A549 (cell line): ENCODE measurements at regions of chr3 and their contacts with region 1.

Region 1: DNA sequence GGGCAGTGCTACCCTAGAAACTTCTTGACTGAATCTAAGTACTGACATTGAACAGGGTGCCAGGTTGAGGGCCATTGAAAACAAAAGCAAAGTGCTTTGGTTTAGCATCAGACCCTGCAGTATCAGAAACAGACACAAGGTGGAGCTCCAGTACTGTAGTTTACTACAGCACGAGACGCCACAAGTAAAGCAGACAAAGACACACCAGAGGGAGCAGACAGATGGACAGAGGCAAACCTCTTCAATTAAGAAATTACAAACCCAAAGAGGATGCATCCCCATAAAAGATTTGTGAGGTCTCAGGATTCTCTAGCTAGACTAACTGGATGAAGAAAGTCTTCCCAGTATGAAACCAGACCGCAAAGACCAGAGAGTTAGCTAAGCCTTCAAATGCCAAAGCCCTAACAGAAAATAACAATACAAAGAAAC is 16.6 kb downstream of the TOP2B start:
- DNase-seq: peak; percentile 48 to 83
- ATAC-seq: peak; percentile 99
- H3K4me3 ChIP-seq: no peak overlapping the region
- H3K27ac ChIP-seq: no peak overlapping the region
- H3K4me1 ChIP-seq: 0 out of 3 replicates have a peak, but pooled peaks cover 3% of the 10 kb centered on the region
- CTCF ChIP-seq: peak; percentile 85
- EP300 ChIP-seq: no peak
- POLR2A ChIP-seq: no peak
- RAD21 ChIP-seq: peak; percentile 87 to 92

Region 2: GRCh38 chr3:25433868-25434267 is 214.3 kb before region 1 on chr3:
- CTCF ChIA-PET with region 1: no interaction called
- POLR2A ChIA-PET with region 1: no interaction called
- DNase-seq: peak in 1 of 2 experiments; percentile 78
- ATAC-seq: peak; percentile 69 to 82
- H3K4me3 ChIP-seq: peak overlapping the region; percentile 68
- H3K27ac ChIP-seq: peak overlapping the region; percentile 85 to 92
- H3K4me1 ChIP-seq: peaks cover 53% of the 10 kb centered on the region
- CTCF ChIP-seq: no peak
- EP300 ChIP-seq: no peak
- POLR2A ChIP-seq: no peak
- RAD21 ChIP-seq: no peak

Region 3: DNA sequence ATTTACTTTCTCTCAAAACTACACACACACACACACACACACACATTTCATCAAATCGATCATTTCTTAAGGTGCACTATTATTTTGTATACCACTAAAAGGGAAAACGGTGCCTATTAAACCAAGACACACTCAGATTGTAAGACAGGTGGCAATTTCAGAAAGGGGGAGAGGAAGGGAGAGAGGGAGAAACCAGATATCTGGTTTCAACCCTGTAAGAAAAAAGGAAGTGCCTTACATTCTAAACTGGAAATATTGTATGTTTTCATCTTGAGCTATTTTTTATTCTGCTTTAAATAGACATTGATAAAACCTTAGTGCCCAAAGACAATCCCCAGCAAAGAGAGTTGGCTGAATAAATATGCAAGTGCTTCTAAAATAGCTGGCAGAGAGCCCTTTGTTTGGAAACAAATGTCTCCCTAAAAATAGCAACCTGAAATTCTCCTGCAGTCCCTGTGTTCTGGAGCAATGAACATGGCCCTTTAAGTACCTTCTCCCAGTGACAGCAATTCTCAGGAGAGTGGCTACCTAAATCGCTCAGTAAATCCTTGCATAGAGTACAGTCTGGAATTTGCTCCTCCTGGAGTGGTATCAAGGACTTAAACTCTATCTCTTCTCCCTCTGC is 134.4 kb before region 1 on chr3:
- CTCF ChIA-PET with region 1: no interaction called
- POLR2A ChIA-PET with region 1: no interaction called
- DNase-seq: no peak
- ATAC-seq: no peak
- H3K4me3 ChIP-seq: no peak overlapping the region
- H3K27ac ChIP-seq: no peak overlapping the region; a peak in 1 of 6 replicates
- H3K4me1 ChIP-seq: peaks cover 12% of the 10 kb centered on the region
- CTCF ChIP-seq: no peak
- EP300 ChIP-seq: no peak
- POLR2A ChIP-seq: no peak
- RAD21 ChIP-seq: no peak

Region 4: DNA sequence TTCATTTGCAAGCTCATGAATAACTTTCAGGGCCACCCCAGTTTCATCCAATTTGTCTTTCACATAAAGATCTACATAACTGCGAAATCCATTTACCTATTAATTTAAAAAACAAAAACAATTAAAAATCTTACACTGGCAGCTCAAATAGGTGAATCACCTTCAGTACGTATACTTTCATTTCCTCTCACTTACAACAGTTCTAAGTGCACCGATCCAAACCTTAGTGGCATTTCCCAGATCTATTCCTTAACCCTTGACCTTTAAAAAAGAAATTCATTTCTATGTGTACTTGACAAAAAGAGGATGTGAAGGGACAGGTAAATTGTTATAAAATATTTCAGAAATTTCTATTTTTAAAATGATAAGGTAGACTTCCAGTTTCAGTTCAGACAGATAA is 14.2 kb before region 1 on chr3:
- CTCF ChIA-PET with region 1: interaction called, 15 read pairs
- POLR2A ChIA-PET with region 1: no interaction called
- DNase-seq: no peak
- ATAC-seq: no peak
- H3K4me3 ChIP-seq: no peak overlapping the region
- H3K27ac ChIP-seq: no peak overlapping the region
- H3K4me1 ChIP-seq: peaks cover 38% of the 10 kb centered on the region
- CTCF ChIP-seq: no peak
- EP300 ChIP-seq: no peak
- POLR2A ChIP-seq: no peak
- RAD21 ChIP-seq: no peak

Region 5: DNA sequence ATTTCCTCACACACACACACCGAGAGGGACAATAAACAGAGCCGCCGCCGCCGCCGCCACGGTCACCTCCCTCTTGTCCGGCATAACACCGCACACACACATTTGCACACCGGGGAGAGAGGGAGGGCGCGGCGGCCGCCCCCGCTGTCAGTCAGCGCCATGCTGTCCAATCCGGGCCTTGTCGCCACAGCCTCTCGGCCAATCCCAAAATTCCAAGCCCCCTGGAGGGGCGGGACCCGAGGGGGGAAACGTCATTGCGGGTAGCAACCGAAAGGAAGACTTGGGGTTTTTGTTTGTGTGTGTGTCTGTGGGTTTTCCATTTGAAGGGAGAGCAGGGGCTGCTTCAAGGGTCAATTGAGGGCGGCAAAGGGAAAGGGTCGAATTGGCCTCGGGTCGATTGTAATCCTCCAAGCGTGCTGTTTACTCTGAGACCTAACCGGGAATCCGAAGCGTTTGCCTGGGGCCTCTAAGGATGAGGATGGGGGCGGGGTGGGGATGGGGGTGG is 16.7 kb after region 1 on chr3 and contains the start of gene TOP2B:
- CTCF ChIA-PET with region 1: interaction called, 18 read pairs
- POLR2A ChIA-PET with region 1: no interaction called
- DNase-seq: peak; percentile 95 to 98
- ATAC-seq: peak; percentile 96 to 99
- H3K4me3 ChIP-seq: peak within 1 kb of the TSS; percentile 73
- H3K27ac ChIP-seq: peak within 1 kb of the TSS; percentile 86 to 97
- H3K4me1 ChIP-seq: peaks cover 24% of the 10 kb centered on the region
- CTCF ChIP-seq: no peak
- EP300 ChIP-seq: no peak
- POLR2A ChIP-seq: peak; percentile 57
- RAD21 ChIP-seq: no peak
- polyA plus RNA-seq, gene TOP2B: 85.5 and 95.7 TPM in 2 replicates

Region 6: GRCh38 chr3:25707268-25707926 is 59.3 kb after region 1 on chr3:
- CTCF ChIA-PET with region 1: no interaction called
- POLR2A ChIA-PET with region 1: no interaction called
- DNase-seq: no peak
- ATAC-seq: no peak
- H3K4me3 ChIP-seq: no peak overlapping the region
- H3K27ac ChIP-seq: no peak overlapping the region
- H3K4me1 ChIP-seq: no peaks in the 10 kb centered on the region
- CTCF ChIP-seq: no peak
- EP300 ChIP-seq: no peak
- POLR2A ChIP-seq: no peak
- RAD21 ChIP-seq: no peak

Region 7: DNA sequence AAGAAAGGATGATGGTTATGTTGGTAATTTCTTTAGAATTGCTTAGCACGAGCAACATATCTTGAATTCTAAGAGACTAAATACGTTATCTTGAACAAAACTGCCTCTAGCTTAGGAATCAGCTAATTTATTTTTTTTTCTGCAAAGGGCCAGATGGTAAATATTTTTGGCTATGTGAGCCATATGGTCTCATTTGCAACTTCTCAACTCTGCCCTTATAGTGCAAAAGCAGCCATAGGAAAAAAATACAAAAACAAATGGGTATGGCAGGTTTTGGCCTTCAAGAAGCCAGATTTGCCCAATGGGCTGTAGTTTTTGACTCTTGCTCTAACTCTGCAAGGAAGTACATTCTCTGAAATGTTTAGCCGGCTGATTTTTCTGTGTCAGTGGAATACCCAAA is 153.7 kb after region 1 on chr3:
- CTCF ChIA-PET with region 1: no interaction called
- POLR2A ChIA-PET with region 1: no interaction called
- DNase-seq: no peak
- ATAC-seq: no peak
- H3K4me3 ChIP-seq: no peak overlapping the region
- H3K27ac ChIP-seq: no peak overlapping the region
- H3K4me1 ChIP-seq: no peaks in the 10 kb centered on the region
- CTCF ChIP-seq: no peak
- EP300 ChIP-seq: no peak
- POLR2A ChIP-seq: no peak
- RAD21 ChIP-seq: no peak

Region 8: DNA sequence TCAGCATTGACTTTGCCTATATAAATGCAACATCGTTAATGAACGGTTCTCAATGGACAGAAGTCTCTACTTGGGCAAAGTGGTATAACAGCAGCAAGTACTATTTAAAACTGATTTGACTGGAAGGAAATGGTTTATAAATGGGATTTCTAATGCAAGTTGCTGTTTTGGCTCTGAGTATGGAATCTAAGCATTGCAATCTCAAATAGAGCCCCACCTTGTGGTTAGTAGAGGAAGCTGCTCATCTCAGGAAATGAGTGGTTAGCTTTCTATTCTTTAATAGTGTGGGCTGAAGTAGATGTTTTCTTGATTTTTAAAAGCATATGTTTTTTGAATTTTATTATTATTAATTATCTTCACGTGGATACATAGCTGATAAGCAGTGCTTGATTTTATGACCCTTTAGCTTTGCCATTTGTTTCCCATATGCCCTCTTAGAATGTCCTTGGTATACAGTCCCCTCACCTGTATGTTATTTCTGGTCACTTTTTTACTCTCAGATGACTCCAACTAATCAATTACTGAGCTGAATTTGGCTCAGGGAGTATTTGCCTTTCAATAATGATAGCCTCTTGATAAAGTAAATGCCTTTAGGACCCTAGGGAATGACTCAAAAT is 208.9 kb after region 1 on chr3:
- CTCF ChIA-PET with region 1: interaction called, 21 read pairs
- POLR2A ChIA-PET with region 1: no interaction called
- DNase-seq: peak; percentile 32 to 48
- ATAC-seq: peak; percentile 50 to 75; a peak in 4 of 6 replicates
- H3K4me3 ChIP-seq: no peak overlapping the region
- H3K27ac ChIP-seq: no peak overlapping the region
- H3K4me1 ChIP-seq: peaks cover 21% of the 10 kb centered on the region
- CTCF ChIP-seq: peak; percentile 70
- EP300 ChIP-seq: no peak
- POLR2A ChIP-seq: no peak
- RAD21 ChIP-seq: peak; percentile 51 to 63